Common myeloid progenitor, CD34-positive (primary cell): ENCODE measurements at regions of chr6 and their contacts with region 1.

Region 1: DNA sequence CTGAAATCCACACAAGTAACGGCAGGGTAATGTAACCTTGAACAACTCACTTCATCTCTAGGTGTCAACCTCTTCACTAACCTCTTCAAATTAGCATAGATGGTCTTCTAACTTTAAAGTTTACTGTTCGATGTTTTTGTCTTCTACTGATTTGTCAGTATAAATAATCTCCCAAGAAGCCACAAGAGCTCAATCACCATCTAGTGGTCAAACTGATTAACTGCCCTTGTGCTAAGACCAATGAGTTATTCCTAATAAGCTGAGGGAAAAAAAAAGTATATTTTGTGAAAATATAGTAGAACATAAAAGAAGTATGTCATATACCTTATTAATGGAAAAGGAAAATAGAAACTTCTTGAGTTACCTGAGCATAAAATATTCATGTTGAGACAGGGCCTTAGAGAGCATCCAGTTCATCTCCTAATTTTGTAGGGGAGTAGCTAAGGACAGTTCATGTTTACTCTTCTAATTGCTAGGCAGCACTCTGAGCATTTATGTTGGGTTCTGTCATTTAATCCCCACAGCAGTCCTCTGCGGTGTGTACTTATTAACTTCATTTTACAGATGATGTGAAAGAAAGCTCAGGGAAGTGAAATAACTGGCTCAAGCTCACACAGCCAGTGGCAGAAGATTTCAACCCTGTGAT is 317.1 kb downstream of the ESR1 start:
- DNase-seq: peak; percentile 50 to 69 (median 68)
- H3K4me3 ChIP-seq: no peak overlapping the region
- H3K27ac ChIP-seq: no peak overlapping the region
- H3K4me1 ChIP-seq: no peaks in the 10 kb centered on the region
- H3K27me3 ChIP-seq: no peaks in the 10 kb centered on the region

Region 2: DNA sequence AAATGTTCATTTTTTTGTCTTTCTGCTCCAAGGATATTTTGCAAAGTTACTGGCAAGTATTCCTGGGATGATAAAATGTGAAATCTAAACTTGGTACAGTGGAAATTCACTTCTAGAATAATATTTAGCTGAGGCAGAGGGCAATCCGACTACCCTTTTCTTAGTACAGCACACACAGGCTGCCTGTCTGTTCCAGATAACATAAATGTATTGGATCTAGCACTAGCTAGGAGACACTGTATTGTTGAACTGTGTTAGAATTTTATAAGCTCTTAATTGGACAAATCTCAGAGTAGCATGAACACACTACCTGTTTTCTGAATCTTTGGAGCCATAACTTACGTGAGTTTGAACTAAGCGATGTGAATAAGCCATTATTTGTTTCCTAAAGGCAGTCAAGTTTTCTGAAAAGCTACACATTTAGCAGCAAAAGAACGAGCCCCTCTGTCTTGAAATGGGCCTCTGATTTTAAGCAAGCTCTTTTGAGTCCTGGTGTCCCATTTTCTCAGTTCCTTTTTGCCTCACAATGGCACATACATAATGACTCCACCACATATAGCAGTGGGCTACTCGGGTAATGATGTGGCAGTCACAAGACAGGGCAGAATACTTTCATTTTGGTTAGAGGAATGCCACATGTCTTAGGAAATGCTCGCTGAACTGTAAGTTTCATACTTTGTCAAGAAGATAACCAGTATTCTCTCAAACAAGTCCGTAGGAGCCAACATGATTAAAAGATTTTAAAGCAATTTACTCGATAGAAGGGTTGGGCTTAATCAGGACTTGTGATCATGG is 433.6 kb before region 1 on chr6:
- CTCF ChIA-PET with region 1: interaction called, 23 read pairs
- POLR2A ChIA-PET with region 1: no interaction called
- DNase-seq: peak; percentile 63 to 88 (median 80)
- H3K4me3 ChIP-seq: peak overlapping the region in 6 of 7 experiments; percentile 52 to 82 (median 62)
- H3K27ac ChIP-seq: peak overlapping the region; percentile 62 to 87
- H3K4me1 ChIP-seq: peaks cover 0 to 22% (median 8%) of the 10 kb centered on the region in 4 experiments
- H3K27me3 ChIP-seq: no peaks in the 10 kb centered on the region

Region 3: DNA sequence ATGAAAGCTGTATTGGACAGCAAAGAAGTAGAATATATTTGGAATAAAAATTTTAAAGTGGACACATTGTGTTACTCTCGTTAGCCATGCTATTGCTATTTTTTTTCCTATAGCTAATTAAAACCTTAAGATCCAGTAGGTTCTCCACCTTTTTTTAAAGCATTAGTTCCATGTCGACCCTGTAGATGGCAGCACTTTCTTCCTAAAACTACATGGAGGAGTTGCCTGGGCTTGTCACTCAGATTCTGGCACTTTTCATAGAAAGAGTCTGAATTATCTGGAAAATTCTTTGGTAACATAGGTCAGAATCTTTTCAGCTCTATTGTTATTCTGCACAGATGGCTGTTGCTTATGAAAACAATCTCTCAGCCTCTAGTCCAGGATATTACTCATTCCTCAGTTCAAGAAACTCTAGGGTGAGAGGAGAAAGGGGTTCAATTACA is 359.1 kb before region 1 on chr6:
- CTCF ChIA-PET with region 1: interaction called, 12 read pairs
- POLR2A ChIA-PET with region 1: no interaction called
- DNase-seq: peak; percentile 57 to 75 (median 72)
- H3K4me3 ChIP-seq: no peak overlapping the region
- H3K27ac ChIP-seq: no peak overlapping the region
- H3K4me1 ChIP-seq: peaks cover 0 to 7% (median 4%) of the 10 kb centered on the region in 4 experiments
- H3K27me3 ChIP-seq: no peaks in the 10 kb centered on the region

Region 4: DNA sequence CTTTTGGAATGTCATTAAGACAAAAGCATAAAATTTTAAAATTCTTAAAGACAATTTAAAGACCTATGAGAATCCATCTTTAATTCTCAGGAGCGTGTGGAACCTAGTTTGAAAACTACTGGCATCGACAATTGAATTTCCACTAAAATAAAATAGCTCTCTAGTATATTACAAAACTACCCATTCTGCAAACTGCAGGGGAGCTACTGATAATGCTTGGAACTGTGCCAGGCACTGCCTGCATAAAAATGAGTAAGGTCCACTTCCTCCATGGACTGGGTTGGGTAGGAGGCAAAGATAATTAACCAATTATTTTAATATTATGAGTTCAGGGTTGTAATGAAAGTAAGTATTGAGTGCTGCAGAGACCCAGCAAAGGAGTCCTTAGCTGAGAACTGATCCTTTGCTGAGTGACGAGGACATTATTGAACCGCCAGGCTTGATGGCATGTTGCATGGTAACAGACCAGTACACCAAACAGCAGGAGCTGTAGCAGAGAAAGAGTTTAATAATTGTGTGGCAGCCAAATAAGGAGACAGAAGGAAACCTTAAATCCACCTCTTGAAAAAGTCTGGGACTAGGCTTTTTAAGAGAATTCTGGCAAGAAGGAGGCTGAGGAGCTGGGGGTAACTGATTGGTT is 55.8 kb before region 1 on chr6:
- CTCF ChIA-PET with region 1: no interaction called
- POLR2A ChIA-PET with region 1: no interaction called
- DNase-seq: peak in 2 of 3 donors; percentile 5 to 18
- H3K4me3 ChIP-seq: no peak overlapping the region
- H3K27ac ChIP-seq: no peak overlapping the region
- H3K4me1 ChIP-seq: no peaks in the 10 kb centered on the region
- H3K27me3 ChIP-seq: no peaks in the 10 kb centered on the region

Region 5: DNA sequence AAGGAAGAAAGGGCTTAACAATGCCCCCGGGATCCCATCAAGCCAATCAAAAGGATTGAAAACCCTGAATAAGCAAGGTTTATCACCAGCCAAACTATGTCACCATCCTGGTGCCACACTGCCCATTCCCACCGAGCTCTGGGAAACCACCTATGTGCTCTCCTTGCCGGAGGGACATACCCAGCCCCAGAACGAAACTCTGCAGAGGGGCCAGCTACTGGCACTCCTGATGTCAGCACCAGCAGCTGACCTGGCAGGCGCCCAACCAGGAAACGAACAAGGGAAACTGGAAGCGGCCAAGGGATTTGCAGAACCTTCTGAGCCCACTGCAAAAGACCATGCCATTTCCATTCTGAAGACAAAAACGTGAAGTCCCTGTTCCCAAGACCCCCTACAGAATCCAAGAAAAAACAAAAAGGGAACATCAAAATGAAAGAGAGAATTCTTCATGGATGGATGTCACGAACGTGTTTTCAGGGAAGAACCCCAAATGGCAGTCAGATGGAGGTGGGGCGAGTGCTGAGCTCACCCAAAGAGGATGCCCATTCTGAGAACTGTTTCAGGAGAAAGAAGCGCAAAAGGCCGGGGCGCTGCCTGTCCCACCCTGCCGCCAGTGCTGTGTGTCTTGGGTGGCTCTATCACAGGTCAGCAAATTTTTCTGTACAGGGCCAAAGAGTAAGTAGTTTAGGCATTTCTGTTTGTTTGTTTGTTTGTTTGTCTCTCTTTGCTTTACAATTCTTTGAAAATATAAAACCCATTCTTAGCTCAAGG is 11.9 kb before region 1 on chr6:
- CTCF ChIA-PET with region 1: interaction called, 12 read pairs
- POLR2A ChIA-PET with region 1: no interaction called
- DNase-seq: peak in 2 of 3 donors; percentile 32 to 37
- H3K4me3 ChIP-seq: no peak overlapping the region
- H3K27ac ChIP-seq: no peak overlapping the region
- H3K4me1 ChIP-seq: peaks cover 0 to 19% (median 6%) of the 10 kb centered on the region in 4 experiments
- H3K27me3 ChIP-seq: no peaks in the 10 kb centered on the region